Left cardiac atrium (tissue), 4 donors: ENCODE measurements at regions of chr15 and their contacts with region 1.

Region 1: DNA sequence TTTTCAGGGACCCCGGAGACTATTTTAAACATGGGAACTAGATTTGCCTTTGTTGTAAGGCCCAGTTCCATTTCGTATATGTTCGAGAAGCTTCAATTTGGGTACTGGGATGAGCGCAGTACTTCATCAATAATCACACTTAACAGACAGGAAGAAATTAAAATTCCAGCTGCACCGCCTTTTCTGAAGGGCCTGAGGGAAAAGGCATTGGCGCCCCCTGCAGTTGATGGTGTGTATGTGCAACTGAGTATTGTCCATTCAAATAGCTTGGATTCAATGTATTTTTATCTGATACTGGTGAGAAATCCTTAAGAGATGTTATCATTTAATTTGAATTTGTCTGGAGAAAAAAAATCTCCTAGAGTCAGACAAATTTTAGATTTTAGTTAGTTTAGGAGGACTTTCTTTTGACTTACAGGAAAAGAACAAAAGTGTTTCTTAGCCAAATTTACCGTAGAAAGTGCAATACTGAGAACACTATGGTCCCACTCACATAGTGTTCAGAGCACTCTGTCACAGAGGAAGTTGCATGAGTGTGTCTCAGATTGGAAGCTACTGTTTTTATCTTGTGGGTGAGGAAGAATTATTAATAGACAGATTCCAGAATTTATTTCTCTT is 5.4 kb upstream of the ALDH1A2 start:
- DNase-seq: peak; percentile 59
- ATAC-seq: no peak

Region 2: GRCh38 chr15:57732526-57733331 is 338.2 kb before region 1 on chr15:
- intact Hi-C with region 1: loop called in 1 of 2 experiments (anchors 5 kb)
- DNase-seq: peak; percentile 53
- ATAC-seq: peak; percentile 68 to 69

Region 3: GRCh38 chr15:57751177-57751800 is 319.6 kb before region 1 on chr15:
- intact Hi-C with region 1: loop called (anchors 2 to 5 kb)
- DNase-seq: no peak
- ATAC-seq: peak; percentile 49 to 65

Region 4: DNA sequence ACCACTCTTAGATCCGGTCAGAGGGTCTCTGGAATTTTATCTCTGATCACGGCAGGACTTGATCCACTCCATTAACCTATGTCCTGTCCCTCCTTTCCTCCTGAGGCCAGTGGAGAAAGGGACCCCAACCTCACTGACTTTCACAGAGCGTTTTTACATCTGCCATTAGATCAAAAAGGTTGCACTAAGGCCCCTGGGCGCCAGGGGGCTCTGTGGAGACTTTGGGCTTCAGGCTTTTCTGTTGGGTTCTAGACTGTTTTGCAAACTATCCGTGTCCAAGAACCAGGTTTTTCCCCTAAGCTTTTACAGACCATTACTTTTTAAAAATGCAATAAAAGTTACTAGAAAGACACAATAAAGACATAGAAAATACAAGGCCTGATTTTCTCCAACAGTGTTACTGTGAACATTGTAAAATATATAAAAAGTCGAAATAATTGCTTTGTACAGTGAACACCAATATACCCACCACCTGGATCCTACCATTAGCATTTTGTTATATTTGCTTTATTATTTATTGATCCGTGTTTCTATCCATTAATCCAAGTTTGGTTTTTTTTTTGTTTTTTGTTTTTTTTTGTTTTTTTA is 204.7 kb before region 1 on chr15:
- intact Hi-C with region 1: loop called (anchors 2 kb)
- DNase-seq: peak; percentile 68
- ATAC-seq: peak; percentile 55 to 65